ENCODE measurements at regions of chr21 and their contacts with region 1.

Region 1: DNA sequence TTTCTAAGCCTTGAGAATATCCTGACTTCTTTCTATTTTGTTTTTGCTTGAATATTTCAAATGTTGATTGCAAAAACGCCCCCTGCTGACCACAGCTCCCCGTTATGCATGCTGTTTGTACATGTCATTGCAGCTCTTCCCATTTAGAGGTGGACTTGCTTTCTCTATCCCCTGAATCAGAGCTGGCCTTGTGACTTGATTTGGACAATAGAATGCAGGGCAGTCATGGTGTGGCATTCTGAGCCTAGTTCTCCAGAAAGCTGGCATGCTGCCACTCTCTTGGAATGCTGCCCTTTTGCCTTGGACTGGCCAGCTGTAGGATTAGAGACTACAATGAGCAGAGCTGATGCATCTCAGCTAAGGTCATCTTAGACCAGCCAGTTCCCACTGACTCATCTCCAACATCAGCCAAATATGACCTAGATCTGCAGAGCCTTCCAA is 1561.5 kb downstream of the MRPL39 start:
- DNase-seq: peak; percentile 94
- H3K4me3 ChIP-seq: no peak overlapping the region
- H3K27ac ChIP-seq: peak overlapping the region; percentile 58
- H3K27me3 ChIP-seq: no peaks in the 10 kb centered on the region
- CTCF ChIP-seq: peak; percentile 62

Region 2: DNA sequence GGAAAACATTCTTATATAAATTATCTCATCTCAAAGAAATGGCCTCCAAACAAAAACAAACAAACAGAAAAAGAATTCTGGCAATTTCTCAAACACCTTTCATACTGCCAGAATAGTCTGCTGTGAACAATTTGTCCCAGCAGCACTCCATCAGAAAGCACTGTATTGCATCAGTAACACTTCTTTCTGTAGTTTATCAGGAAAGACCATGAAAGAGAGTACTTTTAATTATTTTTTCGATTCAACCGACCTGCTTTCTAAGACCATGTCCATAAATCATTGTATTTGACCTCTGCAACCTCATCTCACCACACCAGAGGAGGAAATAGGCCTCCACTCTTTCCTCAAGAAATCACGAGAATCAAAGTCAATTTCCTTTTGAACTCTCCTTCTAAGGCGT is 18.4 kb before region 1 on chr21:
- CTCF ChIA-PET with region 1: interaction called, 20 read pairs
- POLR2A ChIA-PET with region 1: no interaction called
- DNase-seq: no peak
- H3K4me3 ChIP-seq: no peak overlapping the region
- H3K27ac ChIP-seq: no peak overlapping the region
- H3K27me3 ChIP-seq: no peaks in the 10 kb centered on the region
- CTCF ChIP-seq: no peak

Region 3: DNA sequence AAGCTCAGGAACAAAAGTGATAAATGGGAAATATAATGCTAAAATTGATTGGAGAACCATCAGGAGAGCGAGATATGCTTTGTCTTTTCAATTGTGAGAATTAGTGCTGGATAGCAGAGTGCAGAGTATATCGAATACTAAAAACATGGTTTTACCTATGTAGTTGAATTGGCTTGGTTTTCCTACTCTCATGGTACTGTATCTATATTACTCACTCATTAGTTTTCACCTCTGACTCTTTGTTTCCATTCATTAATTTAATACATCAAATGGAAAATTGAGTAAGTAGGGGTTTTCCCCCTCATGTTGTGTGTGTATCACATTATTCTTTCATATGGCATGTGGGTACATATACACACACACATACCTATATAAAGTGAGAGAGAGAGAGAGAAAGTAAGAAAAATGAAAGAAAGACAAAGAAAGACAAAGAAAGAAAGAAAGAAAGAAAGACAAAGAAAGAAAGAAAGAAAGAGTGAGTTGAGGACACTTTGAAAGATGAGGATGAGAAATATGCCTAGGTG is 13.0 kb before region 1 on chr21:
- CTCF ChIA-PET with region 1: interaction called, 20 read pairs
- POLR2A ChIA-PET with region 1: no interaction called
- DNase-seq: no peak
- H3K4me3 ChIP-seq: no peak overlapping the region
- H3K27ac ChIP-seq: no peak overlapping the region
- H3K27me3 ChIP-seq: no peaks in the 10 kb centered on the region
- CTCF ChIP-seq: no peak